ENCODE measurements at regions of chr10 and their contacts with region 1.

Region 1: GRCh38 chr10:114550756-114551635 is 107.1 kb downstream of the ABLIM1 start:
- DNase-seq: no peak
- ATAC-seq: no peak
- H3K4me3 Mint-ChIP-seq: no peak overlapping the region
- H3K27ac Mint-ChIP-seq: no peak overlapping the region
- H3K4me1 Mint-ChIP-seq: peaks cover 28% of the 10 kb centered on the region
- H3K27me3 Mint-ChIP-seq: no peaks in the 10 kb centered on the region

Region 2: DNA sequence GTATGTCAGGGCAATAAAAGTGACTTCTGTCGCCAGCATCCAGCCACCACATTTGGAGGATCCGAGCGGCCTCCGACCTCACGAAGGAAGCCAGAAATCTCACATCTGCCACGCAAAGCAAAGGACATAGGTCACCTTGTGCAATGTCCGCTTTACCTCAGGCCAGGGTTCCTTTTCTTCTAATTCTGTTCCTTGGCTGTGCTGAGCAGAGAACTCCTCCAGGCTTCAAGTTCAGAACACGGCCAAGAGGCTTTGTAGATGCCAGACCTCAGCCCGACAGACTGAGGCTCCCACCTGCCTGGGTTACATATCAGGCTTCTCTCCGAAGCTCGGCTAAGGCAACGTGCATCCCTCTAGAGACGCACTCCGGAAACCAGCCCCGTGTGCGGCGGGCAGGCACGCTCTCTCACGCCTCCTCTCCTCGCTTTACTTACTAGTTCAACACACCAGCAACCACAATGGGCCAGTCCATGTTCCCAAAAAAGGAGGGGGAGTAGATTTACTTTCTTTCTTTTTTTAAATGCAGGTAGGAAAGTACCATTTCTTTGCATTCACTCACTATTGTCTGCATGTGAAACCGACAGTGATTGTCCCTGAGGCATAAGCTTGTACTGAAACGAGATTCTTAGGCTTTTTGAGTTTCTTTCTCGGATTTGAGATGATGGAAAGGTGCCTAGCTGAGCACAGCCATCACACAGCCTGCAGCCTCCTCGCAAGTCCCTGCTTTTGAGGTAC is 24.3 kb before region 1 on chr10:
- CTCF ChIA-PET with region 1: interaction called, 421 read pairs
- POLR2A ChIA-PET with region 1: interaction called, 226 read pairs
- DNase-seq: peak; percentile 96
- ATAC-seq: peak; percentile 96
- H3K4me3 Mint-ChIP-seq: peak overlapping the region; percentile 84
- H3K27ac Mint-ChIP-seq: peak overlapping the region; percentile 94
- H3K4me1 Mint-ChIP-seq: peaks cover 68% of the 10 kb centered on the region
- H3K27me3 Mint-ChIP-seq: no peaks in the 10 kb centered on the region

Region 3: DNA sequence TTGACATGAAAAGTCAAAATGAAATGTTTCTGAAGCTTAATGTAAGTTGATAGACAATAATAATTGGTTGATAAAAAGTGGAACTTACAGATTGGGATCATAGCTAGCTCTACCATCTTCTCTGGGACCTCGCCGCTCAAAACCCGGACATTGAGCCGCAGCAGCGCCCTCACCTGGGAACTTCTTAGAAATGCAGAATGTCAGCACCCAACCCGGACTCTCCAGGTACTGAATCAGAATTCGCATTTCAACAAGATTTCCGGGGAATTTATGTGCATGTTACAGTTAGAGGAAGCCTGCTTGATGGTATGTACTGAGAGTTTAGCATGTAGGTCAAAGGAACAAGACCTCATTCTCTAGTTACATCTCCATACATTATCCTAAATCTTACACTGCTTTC is 143.8 kb after region 1 on chr10:
- CTCF ChIA-PET with region 1: interaction called, 16 read pairs
- POLR2A ChIA-PET with region 1: no interaction called
- DNase-seq: peak; percentile 27
- ATAC-seq: no peak
- H3K4me3 Mint-ChIP-seq: no peak overlapping the region
- H3K27ac Mint-ChIP-seq: no peak overlapping the region
- H3K4me1 Mint-ChIP-seq: peaks cover 12% of the 10 kb centered on the region
- H3K27me3 Mint-ChIP-seq: peaks cover 25% of the 10 kb centered on the region

Region 4: DNA sequence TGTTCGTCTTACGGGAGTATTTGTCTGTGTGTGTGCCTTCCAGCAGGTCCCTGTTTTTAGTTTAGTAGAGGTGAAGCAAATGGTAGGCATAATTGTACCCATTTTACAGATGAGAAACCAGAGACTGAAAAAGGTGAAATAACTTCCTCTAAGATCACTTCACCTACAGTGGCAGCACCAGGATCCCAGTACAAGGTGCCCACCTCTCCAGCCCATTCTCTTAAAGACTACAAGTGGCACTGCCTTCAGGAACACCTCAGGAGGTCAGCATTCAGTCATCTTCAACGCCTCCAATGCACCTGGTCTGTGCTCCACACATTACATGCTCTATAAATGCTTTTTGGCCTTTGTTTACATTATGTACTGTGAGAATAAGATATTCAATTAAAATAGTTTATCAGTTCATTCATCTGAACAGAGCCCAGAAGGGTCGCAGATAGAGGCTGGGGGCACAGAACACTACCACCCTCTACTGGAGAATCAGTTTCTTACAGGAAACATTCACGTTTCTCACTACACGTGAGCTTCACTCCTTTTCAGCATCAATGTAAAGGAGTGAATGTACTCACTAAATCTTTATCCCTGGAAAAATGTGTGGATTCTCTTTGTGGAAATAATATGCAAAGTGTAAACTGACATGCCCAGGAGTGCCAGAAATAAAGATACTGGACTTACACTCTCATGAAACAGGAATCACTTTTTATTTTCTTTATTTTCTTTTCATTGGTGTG is 152.5 kb after region 1 on chr10:
- CTCF ChIA-PET with region 1: interaction called, 11 read pairs
- POLR2A ChIA-PET with region 1: no interaction called
- DNase-seq: peak; percentile 30
- ATAC-seq: peak; percentile 36
- H3K4me3 Mint-ChIP-seq: no peak overlapping the region
- H3K27ac Mint-ChIP-seq: no peak overlapping the region
- H3K4me1 Mint-ChIP-seq: no peaks in the 10 kb centered on the region
- H3K27me3 Mint-ChIP-seq: peaks cover 23% of the 10 kb centered on the region

Region 5: DNA sequence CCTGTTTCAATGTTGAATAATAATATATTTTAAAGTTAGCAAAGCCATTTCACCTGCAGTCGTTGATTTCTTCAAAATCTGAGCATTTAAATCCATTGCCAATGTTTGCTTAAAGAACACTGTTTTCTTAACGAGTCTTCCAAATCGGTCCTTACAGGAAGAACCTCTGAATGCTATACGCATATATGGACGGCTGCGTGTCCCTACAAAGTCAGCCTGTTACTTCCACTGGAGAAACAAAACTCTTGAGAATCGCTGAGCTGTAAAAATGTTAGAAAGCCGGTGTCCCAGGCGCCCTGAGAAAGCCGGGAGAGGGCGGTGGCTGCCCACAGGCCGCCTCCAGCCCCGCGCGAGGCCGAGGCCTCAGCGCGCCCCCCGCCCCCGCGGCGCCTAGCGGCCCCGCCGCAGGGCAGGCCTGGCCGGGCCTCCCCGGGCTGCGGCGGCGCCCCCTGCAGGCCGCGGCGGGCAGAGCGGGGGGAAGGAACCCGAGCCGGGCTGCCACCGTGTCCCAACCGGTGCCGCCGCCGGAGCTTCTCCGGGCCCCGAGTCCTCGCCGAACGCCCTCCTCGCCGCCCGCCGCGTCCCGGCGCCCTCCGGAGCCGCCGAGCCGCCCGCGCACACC is 270.4 kb after region 1 on chr10 and contains the start of gene FHIP2A:
- CTCF ChIA-PET with region 1: interaction called, 13 read pairs
- POLR2A ChIA-PET with region 1: no interaction called
- DNase-seq: peak; percentile 84
- ATAC-seq: peak; percentile 93
- H3K4me3 Mint-ChIP-seq: peak within 1 kb of the TSS; percentile 95
- H3K27ac Mint-ChIP-seq: peak within 1 kb of the TSS; percentile 94
- H3K4me1 Mint-ChIP-seq: peaks cover 31% of the 10 kb centered on the region
- H3K27me3 Mint-ChIP-seq: peaks cover 12% of the 10 kb centered on the region
- total RNA-seq, gene FHIP2A: 15.2 to 17.6 TPM

Measured in activated CD8-positive, alpha-beta T cell treated with anti-CD3 and anti-CD28 coated beads, Interleukin-2, amount 10 ng/mL, durations not matched to agents 7 days and 5 days (primary cell).